ENCODE measurements at regions of chr4 and their contacts with region 1.

Region 1: GRCh38 chr4:54274795-54275665 is 45.9 kb downstream of the PDGFRA start:
- DNase-seq: no peak
- H3K4me3 Mint-ChIP-seq: no peak overlapping the region
- H3K27ac Mint-ChIP-seq: no peak overlapping the region
- H3K4me1 Mint-ChIP-seq: peaks cover 2% of the 10 kb centered on the region
- H3K27me3 Mint-ChIP-seq: peaks cover 36% of the 10 kb centered on the region

Region 2: GRCh38 chr4:54315561-54316538 is 40.8 kb after region 1 on chr4:
- CTCF ChIA-PET with region 1: no interaction called
- POLR2A ChIA-PET with region 1: no interaction called
- intact Hi-C with region 1: loop called (anchors 1 kb)
- DNase-seq: no peak
- H3K4me3 Mint-ChIP-seq: no peak overlapping the region
- H3K27ac Mint-ChIP-seq: no peak overlapping the region
- H3K4me1 Mint-ChIP-seq: peaks cover 11% of the 10 kb centered on the region
- H3K27me3 Mint-ChIP-seq: peaks cover 7% of the 10 kb centered on the region